Transverse colon (tissue), 4 donors: ENCODE measurements at regions of chr7 and their contacts with region 1.

Region 1: DNA sequence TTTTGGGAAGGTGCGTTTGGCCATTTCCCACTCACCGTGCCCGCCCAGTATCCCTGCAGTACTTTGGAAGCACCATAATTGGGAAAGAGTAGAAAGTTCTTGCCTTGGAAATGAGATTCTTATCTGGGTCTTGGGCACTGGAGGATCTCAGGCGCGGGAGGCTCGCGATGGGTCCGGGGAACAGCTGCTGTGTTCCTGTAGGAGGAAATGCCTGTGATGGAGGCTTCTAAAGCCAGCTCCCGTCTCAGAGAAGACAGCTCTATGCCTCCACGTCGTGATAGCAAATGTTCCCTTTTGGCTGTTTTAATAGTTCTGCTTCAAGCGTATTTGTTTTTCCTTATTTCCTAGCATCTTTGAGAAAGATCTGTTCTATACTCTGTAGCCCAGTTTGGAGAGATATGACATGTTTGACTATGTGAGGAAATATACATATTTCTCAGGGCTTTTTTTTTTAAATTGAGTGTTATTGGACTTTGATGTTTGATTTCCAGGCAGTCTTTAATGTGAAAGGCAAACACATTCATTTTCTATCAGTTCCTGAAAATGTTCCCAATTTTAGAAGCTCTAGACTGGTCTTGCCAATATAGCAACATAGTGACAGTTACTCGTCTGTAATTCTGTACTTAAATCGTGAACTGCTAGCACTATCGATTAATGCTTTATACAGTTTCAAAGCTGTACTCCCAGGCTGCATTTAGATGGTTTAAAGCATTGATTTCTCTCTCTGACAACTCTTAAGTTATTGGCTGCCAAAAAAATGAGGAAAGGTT is 280.8 kb downstream of the DPP6 start:
- DNase-seq: no peak
- H3K4me3 ChIP-seq: no peak overlapping the region
- H3K27ac ChIP-seq: no peak overlapping the region
- H3K4me1 ChIP-seq: no peaks in the 10 kb centered on the region
- H3K27me3 ChIP-seq: no peaks in the 10 kb centered on the region
- CTCF ChIP-seq: no peak
- EP300 ChIP-seq: no peak
- POLR2A ChIP-seq: no peak

Region 2: DNA sequence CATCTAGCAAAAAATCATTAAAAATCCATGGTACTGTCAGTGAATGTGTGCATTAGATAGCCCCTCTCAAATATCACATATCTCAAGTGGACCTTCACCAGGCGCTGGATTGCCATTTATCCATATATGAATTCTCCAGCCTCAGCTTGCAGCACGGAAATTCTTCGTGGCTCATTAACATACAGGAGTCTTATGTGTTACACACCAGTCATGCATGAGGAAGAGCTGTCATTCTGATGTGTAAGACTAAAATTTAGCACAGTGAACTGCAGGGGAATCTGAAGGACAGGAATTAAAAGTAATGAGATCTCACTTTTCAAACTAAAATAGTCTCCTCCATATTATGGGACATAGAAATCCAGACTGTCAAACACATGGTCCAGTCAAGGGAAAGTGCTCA is 823.2 kb before region 1 on chr7:
- in situ Hi-C with region 1: no loop called
- intact Hi-C with region 1: loop called (anchors 5 kb)
- DNase-seq: no peak
- H3K4me3 ChIP-seq: no peak overlapping the region
- H3K27ac ChIP-seq: no peak overlapping the region
- H3K4me1 ChIP-seq: no peaks in the 10 kb centered on the region
- H3K27me3 ChIP-seq: no peaks in the 10 kb centered on the region
- CTCF ChIP-seq: no peak
- EP300 ChIP-seq: no peak
- POLR2A ChIP-seq: no peak